Posterior vena cava (tissue), 2 donors: ENCODE measurements at regions of chr3 and their contacts with region 1.

Region 1: DNA sequence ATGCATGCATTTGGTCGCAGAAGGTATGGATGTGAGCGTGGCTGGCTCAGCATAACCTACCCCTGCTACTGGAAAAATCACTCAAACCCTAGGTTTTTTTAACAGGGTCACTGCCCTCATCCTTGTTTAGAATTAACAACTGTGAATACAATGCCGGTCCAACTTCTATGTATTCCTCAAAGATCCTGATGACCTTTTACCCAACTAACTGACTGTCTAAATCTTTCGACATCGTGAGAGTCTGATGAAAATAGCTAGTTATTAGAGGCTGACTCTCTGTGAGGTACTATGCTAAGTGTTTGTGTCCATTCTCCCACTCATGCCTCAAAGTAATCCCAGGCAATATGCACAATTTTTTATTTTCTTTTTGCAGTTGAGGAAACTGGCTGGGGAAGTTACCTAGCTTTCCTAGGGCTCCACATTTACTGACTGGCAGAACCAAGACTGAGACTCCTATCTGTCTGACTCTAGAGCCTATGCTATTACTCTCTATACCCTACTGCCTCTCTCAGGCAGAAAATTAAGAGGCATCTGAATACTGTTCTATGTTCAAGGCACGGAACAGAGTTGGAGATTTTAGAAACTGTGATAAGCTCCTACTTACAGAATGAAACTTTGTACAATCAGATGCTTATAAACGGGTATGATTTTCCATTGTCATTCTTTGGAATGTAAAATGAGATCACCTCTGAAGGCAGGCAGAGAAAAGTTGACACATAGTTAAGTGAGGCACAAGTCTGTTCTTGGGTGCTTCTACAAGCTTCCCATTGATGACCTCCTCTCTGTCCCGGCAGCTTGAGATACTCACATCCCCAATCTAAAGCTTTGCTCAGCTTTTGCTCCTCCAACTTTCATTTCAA is 56.4 kb downstream of the FILIP1L start:
- DNase-seq: no peak

Region 2: DNA sequence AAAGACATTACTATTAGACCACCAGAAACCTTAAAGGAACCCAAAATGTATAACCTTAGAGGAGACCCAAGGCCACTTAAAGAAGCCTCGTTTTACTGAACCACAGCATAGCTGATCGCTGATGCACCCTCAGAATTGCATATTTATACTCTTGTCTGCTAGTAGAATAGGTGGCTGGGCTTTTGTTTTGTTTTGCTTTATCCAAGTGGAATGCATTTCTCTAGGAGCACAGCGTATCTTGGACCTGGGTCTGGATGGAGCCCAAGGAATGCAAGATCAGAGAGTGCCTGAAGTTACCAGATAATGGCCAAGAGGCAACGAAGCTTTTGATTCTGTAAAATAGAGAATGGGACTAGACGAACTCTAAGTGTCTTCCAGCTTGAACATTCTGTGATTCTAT is 548.7 kb before region 1 on chr3:
- intact Hi-C with region 1: no loop called
- DNase-seq: no peak

Region 3: DNA sequence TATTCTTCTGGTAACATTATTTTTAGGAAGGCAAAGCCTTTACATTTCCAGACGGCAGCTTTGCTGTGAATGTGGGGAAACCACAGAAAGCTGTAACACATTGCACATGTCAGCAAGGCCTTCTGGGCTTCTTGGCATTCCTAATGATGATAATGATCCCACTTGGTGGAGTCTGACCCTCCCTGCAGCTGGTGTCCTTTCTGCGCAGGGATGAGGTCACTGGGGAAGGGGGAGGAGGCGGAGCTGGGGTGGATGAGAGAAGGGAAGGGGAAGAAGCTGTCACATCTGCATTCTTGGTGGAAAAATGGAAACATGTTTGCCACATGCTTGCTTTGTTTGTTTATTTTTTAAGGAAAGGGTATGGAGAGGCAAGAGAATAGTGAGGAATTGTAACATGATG is 12.2 kb before region 1 on chr3:
- intact Hi-C with region 1: loop called in 1 of 2 experiments (anchors 1 kb)
- DNase-seq: peak; percentile 85

Region 4: DNA sequence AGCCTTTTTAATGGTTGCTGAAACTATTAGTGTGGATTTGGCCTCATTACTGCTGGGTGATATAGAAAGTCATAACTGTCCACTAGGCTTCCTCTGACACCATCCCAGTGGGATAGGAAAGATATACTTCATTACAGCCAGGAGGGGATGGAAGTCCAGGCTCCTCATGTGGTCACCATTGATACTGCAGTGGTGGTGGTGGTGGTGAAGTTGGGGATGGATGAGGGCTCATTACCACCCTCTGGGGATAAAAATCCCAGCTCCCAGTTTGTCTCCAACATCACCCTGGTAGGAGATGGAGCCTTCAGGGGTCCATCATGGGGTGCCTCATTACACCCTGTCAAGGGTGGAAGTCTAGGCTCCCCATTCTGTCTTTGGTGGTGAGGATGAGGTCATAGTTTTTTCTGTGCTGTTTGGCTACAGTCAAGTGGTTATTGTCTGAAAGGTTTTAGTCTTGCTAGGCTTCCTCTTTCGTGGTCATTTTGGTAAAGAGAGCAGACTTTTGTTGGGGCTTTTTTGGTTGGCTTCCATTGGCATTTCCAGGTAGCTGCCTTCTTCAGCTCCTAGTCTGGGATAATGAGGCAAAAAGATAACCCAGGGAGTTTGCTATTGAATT is 86.4 kb after region 1 on chr3:
- intact Hi-C with region 1: no loop called
- DNase-seq: no peak

Region 5: DNA sequence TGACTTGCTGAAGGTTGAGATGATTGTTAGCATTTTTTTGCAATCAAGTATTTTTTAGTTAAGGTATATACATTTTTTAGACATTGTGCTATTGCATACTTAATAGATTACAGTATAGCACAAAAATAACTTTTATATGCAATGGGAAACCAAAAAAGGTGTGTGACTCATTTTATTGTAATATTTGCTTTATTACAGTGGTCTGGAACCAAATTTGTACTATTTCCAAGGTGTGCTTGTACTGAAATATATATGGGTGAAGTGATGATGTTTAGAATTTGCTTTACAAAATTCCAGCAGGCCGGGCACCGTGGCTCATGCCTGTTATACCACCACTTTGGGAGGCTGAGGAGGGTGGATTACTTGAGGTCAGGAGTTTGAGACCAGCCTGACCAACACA is 173.7 kb after region 1 on chr3:
- intact Hi-C with region 1: no loop called
- DNase-seq: no peak